MCF 10A (cell line): ENCODE measurements at regions of chr11 and their contacts with region 1.

Region 1: GRCh38 chr11:18395735-18396504 is 1.6 kb downstream of the LDHA start:
- DNase-seq: peak; percentile 99
- H3K4me3 Mint-ChIP-seq: peak overlapping the region; percentile 97
- H3K27ac Mint-ChIP-seq: peak overlapping the region; percentile 97
- H3K4me1 Mint-ChIP-seq: peaks cover 18% of the 10 kb centered on the region
- H3K27me3 Mint-ChIP-seq: no peaks in the 10 kb centered on the region
- CTCF ChIP-seq: no peak

Region 2: GRCh38 chr11:18310800-18311340 is 85.0 kb before region 1 on chr11:
- CTCF ChIA-PET with region 1: no interaction called
- POLR2A ChIA-PET with region 1: interaction called, 163 read pairs
- intact Hi-C with region 1: no loop called
- DNase-seq: peak; percentile 88
- H3K4me3 Mint-ChIP-seq: peak overlapping the region; percentile 60
- H3K27ac Mint-ChIP-seq: peak overlapping the region; percentile 96
- H3K4me1 Mint-ChIP-seq: peaks cover 63% of the 10 kb centered on the region
- H3K27me3 Mint-ChIP-seq: no peaks in the 10 kb centered on the region
- CTCF ChIP-seq: no peak

Region 3: GRCh38 chr11:18352581-18352980 is 43.3 kb before region 1 on chr11:
- CTCF ChIA-PET with region 1: interaction called, 7 read pairs
- POLR2A ChIA-PET with region 1: interaction called, 30 read pairs
- intact Hi-C with region 1: no loop called
- DNase-seq: peak; percentile 6
- H3K4me3 Mint-ChIP-seq: no peak overlapping the region
- H3K27ac Mint-ChIP-seq: peak overlapping the region; percentile 57
- H3K4me1 Mint-ChIP-seq: peaks cover 8% of the 10 kb centered on the region
- H3K27me3 Mint-ChIP-seq: no peaks in the 10 kb centered on the region
- CTCF ChIP-seq: no peak

Region 4: DNA sequence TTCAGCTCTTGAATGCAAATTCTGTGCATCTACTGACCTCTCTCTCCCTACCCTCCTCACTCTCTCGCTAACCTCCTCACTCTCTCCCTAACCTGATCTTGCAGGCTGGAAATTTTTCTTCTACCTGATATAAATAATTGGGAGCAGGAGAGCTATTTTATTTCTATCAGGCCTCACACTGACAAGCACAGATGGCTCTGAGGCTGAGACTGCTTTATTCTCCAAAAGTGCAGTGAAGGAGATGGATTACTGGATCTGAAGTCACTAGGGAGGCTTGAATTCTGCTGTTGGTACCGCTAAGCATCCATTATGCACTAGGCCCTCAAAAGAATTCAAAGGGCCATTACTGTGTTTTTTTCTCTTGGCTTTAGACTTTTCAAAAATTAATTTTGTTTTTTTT is 21.0 kb before region 1 on chr11:
- CTCF ChIA-PET with region 1: no interaction called
- POLR2A ChIA-PET with region 1: interaction called, 24 read pairs
- intact Hi-C with region 1: no loop called
- DNase-seq: no peak
- H3K4me3 Mint-ChIP-seq: no peak overlapping the region
- H3K27ac Mint-ChIP-seq: no peak overlapping the region
- H3K4me1 Mint-ChIP-seq: no peaks in the 10 kb centered on the region
- H3K27me3 Mint-ChIP-seq: no peaks in the 10 kb centered on the region
- CTCF ChIP-seq: no peak

Region 5: DNA sequence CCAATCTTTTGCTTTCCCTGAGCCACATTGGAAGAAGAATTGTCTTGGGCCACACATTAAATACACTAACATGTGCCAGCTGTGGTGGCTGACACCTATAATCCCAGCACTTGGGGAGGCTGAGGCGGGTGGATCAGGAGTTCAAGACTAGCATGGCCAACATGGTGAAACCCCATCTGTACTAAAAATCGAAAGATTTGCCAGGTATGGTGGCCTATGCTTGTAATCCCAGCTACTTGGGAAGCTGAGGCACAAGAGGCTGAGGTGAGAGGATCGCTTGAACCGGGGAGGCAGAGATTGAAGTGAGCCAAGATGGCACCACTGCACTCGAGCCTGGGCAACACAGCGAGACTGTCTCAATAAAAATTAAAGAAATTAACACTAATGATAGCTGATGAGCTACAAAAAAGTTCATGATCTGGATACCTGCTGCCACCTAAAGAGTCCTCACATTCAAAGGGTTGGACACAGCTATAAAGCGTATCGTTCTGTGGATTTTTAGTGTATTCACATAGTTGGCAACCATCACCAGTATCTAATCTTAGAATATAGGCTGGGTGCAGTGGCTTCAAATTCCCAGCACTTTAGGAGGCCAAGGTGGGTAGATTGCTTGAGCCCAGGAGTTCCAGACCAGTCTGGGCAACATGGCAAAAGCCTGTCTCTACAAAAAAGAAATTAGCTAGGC is 12.8 kb after region 1 on chr11:
- CTCF ChIA-PET with region 1: interaction called, 5 read pairs
- POLR2A ChIA-PET with region 1: interaction called, 90 read pairs
- intact Hi-C with region 1: no loop called
- DNase-seq: no peak
- H3K4me3 Mint-ChIP-seq: no peak overlapping the region
- H3K27ac Mint-ChIP-seq: no peak overlapping the region
- H3K4me1 Mint-ChIP-seq: peaks cover 7% of the 10 kb centered on the region
- H3K27me3 Mint-ChIP-seq: no peaks in the 10 kb centered on the region
- CTCF ChIP-seq: no peak

Region 6: DNA sequence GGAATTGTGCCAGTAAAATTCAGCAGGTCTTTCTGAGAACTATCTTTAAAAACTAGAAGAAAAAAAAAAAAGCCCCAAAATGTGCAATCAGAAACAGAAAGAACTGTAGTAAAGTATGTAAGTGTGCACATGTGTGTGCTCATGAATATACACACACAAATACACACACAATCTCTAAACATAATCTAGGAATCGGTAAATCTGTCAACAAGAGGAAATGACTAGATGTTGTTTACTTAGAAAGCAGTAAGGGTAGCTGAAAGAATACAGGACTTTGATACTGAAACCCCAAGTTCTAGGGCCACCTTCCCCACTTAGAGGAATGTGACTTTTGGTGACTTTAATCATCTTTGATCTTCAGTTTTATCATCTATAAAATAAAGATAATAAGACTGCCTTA is 179.4 kb after region 1 on chr11:
- CTCF ChIA-PET with region 1: no interaction called
- POLR2A ChIA-PET with region 1: no interaction called
- intact Hi-C with region 1: no loop called
- DNase-seq: no peak
- H3K4me3 Mint-ChIP-seq: no peak overlapping the region
- H3K27ac Mint-ChIP-seq: no peak overlapping the region
- H3K4me1 Mint-ChIP-seq: peaks cover 6% of the 10 kb centered on the region
- H3K27me3 Mint-ChIP-seq: no peaks in the 10 kb centered on the region
- CTCF ChIP-seq: no peak

Region 7: DNA sequence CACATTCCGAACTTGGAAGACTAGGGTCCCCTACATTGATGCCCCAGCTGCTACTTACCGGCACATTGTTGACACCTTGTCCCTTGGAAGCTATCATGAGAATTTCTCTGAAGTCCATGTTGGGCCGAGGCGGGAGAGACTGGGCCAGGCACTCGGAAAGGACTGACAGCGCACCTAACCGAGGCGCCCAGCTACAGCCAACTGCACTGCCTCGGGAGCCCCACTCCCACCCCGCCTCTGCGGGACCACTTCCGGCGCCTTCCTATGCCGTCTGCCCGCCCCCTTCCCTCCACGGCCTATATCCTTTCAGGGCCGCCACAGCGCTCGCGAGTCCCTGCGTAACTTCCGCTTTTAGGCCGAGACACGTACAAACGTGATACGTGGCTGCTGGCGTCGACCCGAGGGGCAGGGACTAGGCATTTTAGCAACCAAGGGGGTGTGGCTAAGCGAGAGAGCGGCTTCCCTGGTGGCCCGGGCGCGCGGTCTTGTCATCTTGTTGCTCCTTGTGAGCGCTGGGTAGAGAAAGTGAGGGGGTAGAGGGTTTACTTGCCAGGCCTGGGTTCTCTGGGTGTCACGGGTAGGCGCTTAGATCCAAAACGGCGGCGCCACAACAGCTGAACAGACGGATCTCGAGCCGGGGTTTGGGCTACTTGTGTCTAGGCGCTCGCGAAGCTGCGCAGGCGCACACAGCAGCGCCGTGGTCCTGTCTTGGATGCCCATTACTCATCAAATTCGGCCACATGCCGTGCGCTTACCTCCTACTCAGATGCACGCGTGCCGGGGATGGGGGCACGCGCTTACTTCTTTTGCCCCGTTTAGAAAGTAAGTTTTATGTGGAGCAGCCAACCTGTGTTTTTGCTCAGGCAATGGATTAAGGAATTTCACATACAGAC is 238.5 kb after region 1 on chr11 and contains the start of gene SPTY2D1:
- CTCF ChIA-PET with region 1: no interaction called
- POLR2A ChIA-PET with region 1: interaction called, 13 read pairs
- intact Hi-C with region 1: no loop called
- DNase-seq: peak; percentile 99
- H3K4me3 Mint-ChIP-seq: peak within 1 kb of the TSS; percentile 91
- H3K27ac Mint-ChIP-seq: peak within 1 kb of the TSS; percentile 99
- H3K4me1 Mint-ChIP-seq: peaks cover 14% of the 10 kb centered on the region
- H3K27me3 Mint-ChIP-seq: no peaks in the 10 kb centered on the region
- CTCF ChIP-seq: no peak
- total RNA-seq, gene SPTY2D1: 26.8 and 30.2 TPM in 2 replicates

Region 8: GRCh38 chr11:18650859-18651557 is 255.1 kb after region 1 on chr11:
- CTCF ChIA-PET with region 1: no interaction called
- POLR2A ChIA-PET with region 1: no interaction called
- intact Hi-C with region 1: no loop called
- DNase-seq: peak; percentile 71
- H3K4me3 Mint-ChIP-seq: no peak overlapping the region
- H3K27ac Mint-ChIP-seq: no peak overlapping the region
- H3K4me1 Mint-ChIP-seq: no peaks in the 10 kb centered on the region
- H3K27me3 Mint-ChIP-seq: no peaks in the 10 kb centered on the region
- CTCF ChIP-seq: peak; percentile 40

Region 9: GRCh38 chr11:18791207-18791968 is 395.5 kb after region 1 on chr11 and contains the start of gene PTPN5:
- CTCF ChIA-PET with region 1: no interaction called
- POLR2A ChIA-PET with region 1: no interaction called
- intact Hi-C with region 1: no loop called
- DNase-seq: no peak
- H3K4me3 Mint-ChIP-seq: no peak within 1 kb of the TSS
- H3K27ac Mint-ChIP-seq: no peak within 1 kb of the TSS
- H3K4me1 Mint-ChIP-seq: no peaks in the 10 kb centered on the region
- H3K27me3 Mint-ChIP-seq: peaks cover 74% of the 10 kb centered on the region
- CTCF ChIP-seq: no peak
- total RNA-seq, gene PTPN5: not detected in 2 replicates